Posterior vena cava (tissue), 2 donors: ENCODE measurements at regions of chr20 and their contacts with region 1.

Region 1: DNA sequence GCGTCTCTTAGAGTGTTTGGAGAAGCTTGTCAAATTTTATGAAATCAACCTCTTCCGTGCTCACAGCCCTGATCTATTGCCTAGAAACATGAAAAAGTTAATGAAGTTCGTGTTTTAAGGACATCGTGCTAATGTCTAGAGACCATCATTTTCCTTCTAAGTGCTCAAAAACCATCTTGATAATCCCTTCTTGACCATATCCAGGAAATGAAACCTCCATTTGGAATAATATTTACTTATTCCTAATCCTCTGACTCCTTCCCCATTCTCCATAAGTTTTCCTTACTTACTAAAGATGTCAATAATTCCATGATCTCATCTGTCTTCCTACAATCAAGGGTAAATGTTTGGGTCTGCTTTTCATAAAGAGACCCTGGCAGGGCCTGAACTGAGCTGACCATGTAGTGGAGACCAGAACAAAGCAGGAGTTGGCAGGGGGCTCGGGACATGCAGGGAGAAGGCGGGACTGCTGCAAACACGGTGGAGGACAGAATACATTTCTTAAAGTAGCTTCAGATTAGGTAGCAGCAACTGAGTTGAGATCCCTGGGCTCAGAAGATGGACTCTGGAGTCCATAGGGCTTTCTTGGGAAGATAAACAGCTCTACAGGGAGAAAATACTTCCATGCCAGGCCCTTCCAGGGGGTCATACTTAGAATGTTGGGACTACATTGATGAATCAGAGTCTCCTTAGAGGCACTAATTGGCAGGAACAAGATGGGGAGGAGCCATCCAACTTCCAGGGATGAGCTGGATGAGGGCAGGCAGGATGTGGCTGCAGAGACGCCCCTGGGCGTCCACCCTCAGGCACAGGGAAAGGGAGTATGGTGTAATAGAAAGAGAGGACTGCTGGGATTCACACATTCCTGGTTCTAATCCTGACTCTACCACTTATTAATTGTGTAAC is 100.7 kb downstream of the RIN2 start:
- DNase-seq: peak; percentile 86

Region 2: DNA sequence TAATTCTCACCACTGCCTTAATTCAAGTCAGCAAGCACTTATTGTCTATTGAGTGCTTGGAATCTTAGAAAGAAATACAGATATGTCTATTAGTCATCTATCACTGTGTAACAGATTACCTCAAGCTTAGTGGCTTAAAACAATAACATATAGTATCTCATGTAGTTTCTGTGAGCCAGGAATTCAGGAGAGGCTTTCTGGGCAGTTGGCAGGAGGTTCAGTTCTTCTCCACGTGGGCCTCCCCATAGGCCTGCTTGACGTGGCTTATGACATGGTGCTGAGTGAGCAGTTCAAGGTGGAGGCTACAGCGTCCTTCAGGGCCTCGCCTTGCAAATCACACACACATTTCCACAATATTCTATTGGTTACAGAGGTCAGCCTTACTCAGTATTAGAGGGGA is 1201.1 kb before region 1 on chr20:
- intact Hi-C with region 1: loop called in 1 of 2 experiments (anchors 5 kb)
- DNase-seq: no peak

Region 3: GRCh38 chr20:19890445-19891051 is 31.8 kb after region 1 on chr20:
- intact Hi-C with region 1: no loop called
- DNase-seq: no peak

Region 4: GRCh38 chr20:20010639-20011500 is 152.2 kb after region 1 on chr20:
- intact Hi-C with region 1: no loop called
- DNase-seq: no peak